GM12878 (cell line): ENCODE measurements at regions of chr10 and their contacts with region 1.

Region 1: GRCh38 chr10:49552249-49552672 is 13.3 kb upstream of the ERCC6 start:
- DNase-seq: no peak
- ATAC-seq: no peak
- H3K4me3 ChIP-seq: no peak overlapping the region
- H3K27ac ChIP-seq: no peak overlapping the region
- H3K4me1 ChIP-seq: peaks cover 7% of the 10 kb centered on the region
- H3K27me3 ChIP-seq: no peaks in the 10 kb centered on the region
- CTCF ChIP-seq: no peak
- EP300 ChIP-seq: no peak
- POLR2A ChIP-seq: no peak
- RAD21 ChIP-seq: no peak

Region 2: GRCh38 chr10:49538381-49539319 is 13.6 kb before region 1 on chr10 and contains the start of gene ERCC6:
- CTCF ChIA-PET with region 1: interaction called, 3 read pairs
- POLR2A ChIA-PET with region 1: interaction called, 12 read pairs
- RAD21 ChIA-PET with region 1: interaction called, 4 read pairs
- SMC1A ChIA-PET with region 1: interaction called, 3 read pairs
- in situ Hi-C with region 1: no loop called
- intact Hi-C with region 1: no loop called
- DNase-seq: peak; percentile 91
- ATAC-seq: peak; percentile 90
- H3K4me3 ChIP-seq: peak within 1 kb of the TSS; percentile 64
- H3K27ac ChIP-seq: peak within 1 kb of the TSS; percentile 82
- H3K4me1 ChIP-seq: peaks cover 32% of the 10 kb centered on the region
- H3K27me3 ChIP-seq: no peaks in the 10 kb centered on the region
- CTCF ChIP-seq: 0 out of 6 replicates have a peak, but pooled peaks of 1 of the 3 experiments have one; percentile 1
- EP300 ChIP-seq: peak; percentile 51 to 68; a peak in 2 of 4 replicates
- POLR2A ChIP-seq: peak; percentile 91
- RAD21 ChIP-seq: no peak
- polyA plus RNA-seq, gene ERCC6: 4.3 to 6.6 TPM

Region 3: DNA sequence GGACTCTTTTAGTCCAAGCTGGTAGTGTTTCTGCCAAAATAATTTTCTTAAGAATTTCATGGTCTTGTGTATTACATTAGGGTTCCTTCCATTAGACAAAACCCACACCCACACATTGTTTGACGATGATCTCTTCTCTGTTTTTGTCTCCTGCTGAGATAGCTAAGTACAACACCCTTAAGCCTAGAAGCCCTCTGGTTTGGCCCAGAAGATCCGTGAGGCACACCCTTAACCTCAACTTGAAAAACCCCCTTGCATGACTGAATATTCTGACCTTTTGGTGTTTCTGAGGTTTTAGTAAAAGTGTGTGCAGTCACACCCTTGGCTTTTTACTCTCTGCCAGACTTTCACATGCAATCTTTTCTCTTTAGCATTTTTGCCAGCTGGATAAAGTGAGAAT is 16.0 kb after region 1 on chr10:
- CTCF ChIA-PET with region 1: no interaction called
- POLR2A ChIA-PET with region 1: no interaction called
- RAD21 ChIA-PET with region 1: no interaction called
- SMC1A ChIA-PET with region 1: no interaction called
- in situ Hi-C with region 1: no loop called
- intact Hi-C with region 1: no loop called
- DNase-seq: peak; percentile 9
- ATAC-seq: peak; percentile 74
- H3K4me3 ChIP-seq: 0 out of 2 replicates have a peak overlapping the region, but pooled peaks have one; percentile 29
- H3K27ac ChIP-seq: peak overlapping the region; percentile 56; the same call in 1 of the 2 replicates
- H3K4me1 ChIP-seq: no peaks in the 10 kb centered on the region
- H3K27me3 ChIP-seq: no peaks in the 10 kb centered on the region
- CTCF ChIP-seq: no peak
- EP300 ChIP-seq: no peak
- POLR2A ChIP-seq: no peak
- RAD21 ChIP-seq: no peak